CD4-positive, alpha-beta memory T cell (primary cell): ENCODE measurements at regions of chr4 and their contacts with region 1.

Region 1: DNA sequence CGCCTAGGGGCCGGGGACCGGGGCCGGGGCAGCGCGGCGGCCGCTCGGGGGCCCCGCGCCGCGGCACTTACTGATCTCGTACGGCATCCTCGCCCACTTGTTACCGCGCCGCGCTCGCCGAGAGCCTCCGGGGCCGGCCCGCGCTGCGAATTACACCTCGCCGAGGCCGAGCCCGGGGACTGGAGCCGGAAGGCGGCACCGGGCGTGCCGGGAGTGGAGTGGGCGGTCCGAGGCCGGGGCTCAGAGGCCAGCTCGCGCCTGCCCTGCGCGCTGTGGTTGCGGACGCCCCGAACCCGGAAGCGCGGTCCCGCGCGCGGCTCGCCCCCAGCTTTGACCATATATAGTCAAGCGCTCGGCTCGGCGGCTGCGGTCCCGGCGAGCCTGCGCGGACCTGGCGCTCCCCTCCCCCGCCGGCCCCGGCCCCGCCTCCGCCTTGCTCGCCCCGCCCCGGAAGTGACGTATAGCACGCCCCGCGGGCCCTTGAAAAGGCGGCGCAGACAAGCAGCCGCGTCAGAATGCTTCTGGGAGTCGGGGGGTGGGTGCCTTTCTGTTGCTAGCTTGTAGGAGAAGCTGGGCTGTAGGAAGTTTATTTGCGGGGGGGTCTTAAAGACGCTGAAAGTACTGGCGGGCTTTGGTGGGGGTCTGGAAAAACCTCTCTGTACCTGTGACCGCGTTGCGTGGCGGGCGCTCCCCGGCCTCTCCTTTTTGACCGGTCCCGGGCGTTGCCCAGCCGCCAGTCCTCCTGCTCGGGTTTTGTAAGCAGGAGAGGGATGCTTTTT is at the start of gene WDR1:
- DNase-seq: peak; percentile 86 to 91 (median 89)
- H3K4me3 ChIP-seq: peak within 1 kb of the TSS; percentile 50 to 92
- H3K4me3 Mint-ChIP-seq: peak within 1 kb of the TSS; percentile 95 to 98 (median 97)
- H3K27ac ChIP-seq: peak within 1 kb of the TSS; percentile 90
- H3K27ac Mint-ChIP-seq: peak within 1 kb of the TSS; percentile 96 to 99 (median 98)
- H3K4me1 ChIP-seq: peaks cover 61% of the 10 kb centered on the region
- H3K4me1 Mint-ChIP-seq: peaks cover 46 to 73% (median 60%) of the 10 kb centered on the region in 4 donors
- H3K27me3 ChIP-seq: no peaks in the 10 kb centered on the region
- H3K27me3 Mint-ChIP-seq: no peaks in the 10 kb centered on the region
- total RNA-seq, gene WDR1: 295 to 298 TPM

Region 2: GRCh38 chr4:9146967-9147366 is 969.8 kb before region 1 on chr4:
- CTCF ChIA-PET with region 1: no interaction called
- POLR2A ChIA-PET with region 1: interaction called, 3 read pairs
- intact Hi-C with region 1: loop called (anchors 2 kb)
- DNase-seq: no peak
- H3K4me3 ChIP-seq: no peak overlapping the region
- H3K4me3 Mint-ChIP-seq: no peak overlapping the region
- H3K27ac ChIP-seq: no peak overlapping the region
- H3K27ac Mint-ChIP-seq: no peak overlapping the region
- H3K4me1 ChIP-seq: no peaks in the 10 kb centered on the region
- H3K4me1 Mint-ChIP-seq: peaks cover 3 to 5% (median 4%) of the 10 kb centered on the region in 4 donors
- H3K27me3 ChIP-seq: no peaks in the 10 kb centered on the region
- H3K27me3 Mint-ChIP-seq: no peaks in the 10 kb centered on the region

Region 3: DNA sequence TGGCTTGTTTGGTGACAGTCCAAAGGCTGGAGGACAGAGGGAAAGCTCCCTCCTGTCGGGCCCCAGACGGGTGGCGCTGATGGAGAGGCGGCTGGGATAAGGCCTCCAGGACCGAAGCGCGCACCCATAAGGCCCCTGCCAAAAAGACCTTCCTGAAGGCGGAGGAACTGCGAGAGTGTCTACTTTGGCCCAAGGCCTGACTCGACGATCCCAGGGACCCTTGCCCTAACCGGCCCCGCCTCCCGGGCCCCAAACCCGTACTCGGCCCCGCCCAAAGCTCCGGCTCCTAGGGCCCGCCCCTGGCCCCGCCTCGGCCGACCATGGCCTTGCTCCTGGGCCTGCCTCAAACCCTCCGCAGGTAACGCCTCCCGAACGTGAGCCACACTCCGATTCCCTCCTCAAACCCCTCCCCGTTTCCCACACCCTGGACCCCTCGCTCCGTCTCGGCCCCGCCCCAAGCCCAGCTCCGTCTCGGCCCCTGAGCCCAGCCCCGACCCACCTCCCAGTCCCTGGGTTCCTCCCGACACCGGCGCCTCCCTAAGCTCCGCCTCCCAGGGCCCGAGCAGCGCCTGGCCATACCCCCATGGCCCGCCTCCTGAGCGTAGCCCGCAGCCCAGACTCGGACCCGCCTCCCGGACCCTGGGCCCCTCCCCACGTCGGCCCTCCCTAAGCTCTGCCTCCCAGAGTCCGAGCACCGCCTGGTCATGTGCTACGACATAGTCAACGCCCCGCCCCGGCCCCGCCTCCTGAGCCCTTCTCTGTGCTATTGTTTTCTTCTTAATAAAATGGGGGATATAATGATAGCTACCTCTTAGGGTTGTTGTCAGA is 425.3 kb before region 1 on chr4:
- CTCF ChIA-PET with region 1: no interaction called
- POLR2A ChIA-PET with region 1: interaction called, 5 read pairs
- intact Hi-C with region 1: loop called (anchors 1 kb)
- DNase-seq: peak; percentile 89 to 93 (median 91)
- H3K4me3 ChIP-seq: peak overlapping the region; percentile 44 to 67
- H3K4me3 Mint-ChIP-seq: peak overlapping the region; percentile 79 to 91 (median 89)
- H3K27ac ChIP-seq: peak overlapping the region; percentile 67
- H3K27ac Mint-ChIP-seq: peak overlapping the region; percentile 53 to 95 (median 88)
- H3K4me1 ChIP-seq: peaks cover 6% of the 10 kb centered on the region
- H3K4me1 Mint-ChIP-seq: peaks cover 14 to 27% (median 19%) of the 10 kb centered on the region in 4 donors
- H3K27me3 ChIP-seq: no peaks in the 10 kb centered on the region
- H3K27me3 Mint-ChIP-seq: peaks cover 0 to 2% of the 10 kb centered on the region in 2 donors

Region 4: DNA sequence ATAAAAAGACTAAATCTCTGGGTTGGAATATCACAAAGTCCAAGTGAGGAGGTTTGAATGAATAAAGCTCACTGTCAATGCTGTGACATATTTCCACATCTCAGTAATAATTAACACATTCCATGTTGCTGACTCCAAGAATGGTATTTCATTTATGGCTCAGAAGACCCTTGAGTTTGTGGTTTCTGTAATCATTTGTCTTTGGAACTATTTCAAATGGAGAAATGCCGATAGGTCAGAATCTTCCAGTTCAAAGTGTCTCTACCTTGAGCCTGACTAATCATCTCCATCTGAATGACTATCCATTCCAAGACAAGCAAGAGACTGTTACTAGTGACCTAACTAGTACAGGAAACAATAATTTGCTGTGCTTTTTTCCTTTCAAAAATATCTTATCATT is 71.3 kb before region 1 on chr4:
- CTCF ChIA-PET with region 1: no interaction called
- POLR2A ChIA-PET with region 1: no interaction called
- intact Hi-C with region 1: no loop called
- DNase-seq: no peak
- H3K4me3 ChIP-seq: no peak overlapping the region
- H3K4me3 Mint-ChIP-seq: no peak overlapping the region
- H3K27ac ChIP-seq: no peak overlapping the region
- H3K27ac Mint-ChIP-seq: no peak overlapping the region
- H3K4me1 ChIP-seq: no peaks in the 10 kb centered on the region
- H3K4me1 Mint-ChIP-seq: peaks cover 0 to 3% (median 0%) of the 10 kb centered on the region in 4 donors
- H3K27me3 ChIP-seq: no peaks in the 10 kb centered on the region
- H3K27me3 Mint-ChIP-seq: peaks cover 0 to 1% of the 10 kb centered on the region in 2 donors

Region 5: DNA sequence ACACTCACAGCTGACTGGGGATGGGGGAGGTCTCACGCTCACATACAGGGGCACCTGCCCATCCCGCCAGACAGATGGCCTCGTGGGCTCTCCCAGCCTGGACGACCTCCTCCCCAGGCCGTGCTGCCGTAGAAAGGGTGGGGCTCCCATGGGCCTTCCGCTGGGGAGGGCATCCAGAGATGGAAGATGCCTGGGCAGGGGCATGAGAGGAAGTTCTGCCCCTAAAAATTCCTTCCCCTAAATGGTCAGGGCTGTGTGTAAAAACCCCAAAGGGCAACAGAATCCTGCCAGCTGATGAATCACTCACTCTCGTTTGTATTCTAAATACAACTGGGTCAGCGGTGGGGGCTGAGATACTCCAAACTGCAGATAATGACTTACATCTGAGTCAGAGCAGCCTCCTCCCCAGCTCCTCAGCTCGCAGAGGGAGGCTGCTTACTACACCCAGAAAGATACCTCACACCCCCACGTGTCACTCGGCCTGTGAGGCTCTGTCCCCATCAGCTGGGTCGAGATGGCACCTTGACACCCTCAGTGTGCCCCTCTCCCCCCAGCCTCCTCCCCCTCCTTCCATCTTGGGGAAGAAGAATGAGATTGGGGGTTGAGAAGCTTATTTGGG is 10.2 kb before region 1 on chr4:
- CTCF ChIA-PET with region 1: interaction called, 6 read pairs
- POLR2A ChIA-PET with region 1: interaction called, 396 read pairs
- intact Hi-C with region 1: loop called (anchors 1 kb)
- DNase-seq: peak in 4 of 5 donors; percentile 49 to 93 (median 58)
- H3K4me3 ChIP-seq: peak overlapping the region in 1 of 2 donors; percentile 21
- H3K4me3 Mint-ChIP-seq: peak overlapping the region; percentile 40 to 77 (median 71)
- H3K27ac ChIP-seq: peak overlapping the region; percentile 74
- H3K27ac Mint-ChIP-seq: peak overlapping the region; percentile 88 to 99 (median 91)
- H3K4me1 ChIP-seq: peaks cover 97% of the 10 kb centered on the region
- H3K4me1 Mint-ChIP-seq: peaks cover 83 to 100% (median 92%) of the 10 kb centered on the region in 4 donors
- H3K27me3 ChIP-seq: no peaks in the 10 kb centered on the region
- H3K27me3 Mint-ChIP-seq: no peaks in the 10 kb centered on the region

Region 6: GRCh38 chr4:10461091-10461849 is 344.5 kb after region 1 on chr4:
- CTCF ChIA-PET with region 1: interaction called, 5 read pairs
- POLR2A ChIA-PET with region 1: interaction called, 21 read pairs
- intact Hi-C with region 1: loop called (anchors 1 kb)
- DNase-seq: peak; percentile 54 to 83 (median 80)
- H3K4me3 ChIP-seq: peak overlapping the region in 1 of 2 donors; percentile 34
- H3K4me3 Mint-ChIP-seq: peak overlapping the region; percentile 71 to 87 (median 84)
- H3K27ac ChIP-seq: no peak overlapping the region
- H3K27ac Mint-ChIP-seq: peak overlapping the region in 4 of 7 donors; percentile 32 to 81 (median 64)
- H3K4me1 ChIP-seq: peaks cover 25% of the 10 kb centered on the region
- H3K4me1 Mint-ChIP-seq: peaks cover 11 to 34% (median 20%) of the 10 kb centered on the region in 4 donors
- H3K27me3 ChIP-seq: peaks cover 5% of the 10 kb centered on the region
- H3K27me3 Mint-ChIP-seq: peaks cover 19 to 29% of the 10 kb centered on the region in 2 donors